Transverse colon (tissue), 4 donors: ENCODE measurements at regions of chr20 and their contacts with region 1.

Region 1: DNA sequence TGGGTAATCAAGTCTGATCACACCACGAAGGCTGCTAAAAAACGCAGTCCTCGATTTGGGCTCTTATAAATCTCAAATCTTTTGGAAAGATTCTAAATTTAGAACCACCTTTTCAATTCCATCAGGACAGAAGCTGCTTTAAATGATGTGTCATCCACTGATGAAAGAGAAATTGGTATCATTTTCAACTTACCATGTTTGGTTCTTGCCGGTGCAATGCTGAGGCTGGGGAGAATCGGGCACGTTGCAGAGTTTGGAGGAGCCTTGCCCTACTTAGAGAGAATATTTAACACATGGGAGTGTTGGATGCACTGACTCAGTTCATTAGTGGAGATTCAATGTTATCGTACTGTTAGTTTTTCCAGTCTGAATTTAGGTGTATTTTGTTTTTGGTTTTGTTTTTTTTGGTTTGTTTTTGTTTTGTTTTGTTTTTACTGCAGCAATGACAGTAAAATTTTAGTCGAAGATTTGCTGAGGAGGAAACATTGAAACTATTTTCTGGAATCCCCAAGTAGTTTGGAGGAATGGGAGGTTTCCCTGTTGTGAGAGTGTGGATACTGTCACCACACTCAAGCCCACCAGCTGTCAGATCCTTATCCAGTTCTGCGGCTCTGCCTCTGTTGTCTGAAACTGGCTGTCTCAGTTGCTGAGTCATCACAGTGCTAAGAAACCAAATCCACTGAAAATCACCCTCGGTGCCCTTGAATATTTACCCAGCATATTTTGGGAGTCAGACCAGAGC is 496.9 kb downstream of the BTBD3 start:
- DNase-seq: no peak
- H3K4me3 ChIP-seq: no peak overlapping the region
- H3K27ac ChIP-seq: no peak overlapping the region
- H3K4me1 ChIP-seq: no peaks in the 10 kb centered on the region
- H3K27me3 ChIP-seq: no peaks in the 10 kb centered on the region
- CTCF ChIP-seq: no peak
- EP300 ChIP-seq: no peak
- POLR2A ChIP-seq: no peak

Region 2: GRCh38 chr20:12113468-12114371 is 300.9 kb before region 1 on chr20:
- in situ Hi-C with region 1: no loop called
- intact Hi-C with region 1: no loop called
- DNase-seq: no peak
- H3K4me3 ChIP-seq: no peak overlapping the region
- H3K27ac ChIP-seq: peak overlapping the region in 1 of 4 donors; percentile 25
- H3K4me1 ChIP-seq: peaks cover 0 to 9% (median 0%) of the 10 kb centered on the region in 4 donors
- H3K27me3 ChIP-seq: no peaks in the 10 kb centered on the region
- CTCF ChIP-seq: no peak
- EP300 ChIP-seq: no peak
- POLR2A ChIP-seq: no peak

Region 3: DNA sequence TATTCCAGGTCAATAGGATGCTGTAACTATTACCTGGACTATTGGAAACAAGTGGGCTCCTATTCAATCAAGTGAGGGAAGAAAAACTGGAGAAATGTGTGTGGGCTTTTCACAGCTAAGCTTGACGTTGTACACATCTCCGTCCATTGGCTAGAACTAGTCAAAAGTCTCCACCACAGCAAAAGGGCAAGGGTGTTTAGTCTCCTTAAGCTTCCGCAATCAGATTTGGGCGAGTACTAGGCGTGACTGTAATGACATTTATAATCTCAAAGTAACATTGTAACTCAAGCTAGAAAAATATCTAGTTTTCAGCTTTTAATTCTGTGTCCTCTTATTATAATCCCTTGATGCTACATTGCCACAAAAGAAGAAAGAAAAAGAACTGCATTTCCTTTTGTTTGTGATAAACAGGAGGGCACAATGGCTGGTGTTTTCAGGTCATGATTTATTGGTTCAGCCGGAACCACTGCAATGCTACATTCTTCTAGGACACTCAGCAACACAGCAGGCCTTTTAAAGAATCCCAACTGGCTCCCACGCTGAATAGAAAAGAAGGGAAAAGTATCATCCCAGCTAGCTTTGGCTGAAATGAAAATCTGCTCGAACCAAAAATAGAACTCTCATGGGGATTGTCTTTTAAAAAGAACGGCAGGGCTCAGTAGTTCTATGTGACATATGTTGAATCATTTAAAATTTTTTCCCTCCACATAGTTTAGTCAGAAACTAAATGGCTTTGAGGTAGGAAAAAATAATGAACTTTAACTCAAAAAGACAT is 109.2 kb before region 1 on chr20:
- in situ Hi-C with region 1: loop called in 1 of 4 experiments (anchors 25 kb)
- intact Hi-C with region 1: no loop called
- DNase-seq: no peak
- H3K4me3 ChIP-seq: no peak overlapping the region
- H3K27ac ChIP-seq: no peak overlapping the region
- H3K4me1 ChIP-seq: no peaks in the 10 kb centered on the region
- H3K27me3 ChIP-seq: no peaks in the 10 kb centered on the region
- CTCF ChIP-seq: no peak
- EP300 ChIP-seq: no peak
- POLR2A ChIP-seq: no peak

Region 4: GRCh38 chr20:12455149-12455548 is 40.5 kb after region 1 on chr20:
- in situ Hi-C with region 1: no loop called
- intact Hi-C with region 1: no loop called
- DNase-seq: no peak
- H3K4me3 ChIP-seq: no peak overlapping the region
- H3K27ac ChIP-seq: peak overlapping the region in 1 of 4 donors; percentile 31
- H3K4me1 ChIP-seq: no peaks in the 10 kb centered on the region
- H3K27me3 ChIP-seq: no peaks in the 10 kb centered on the region
- CTCF ChIP-seq: no peak
- EP300 ChIP-seq: no peak
- POLR2A ChIP-seq: no peak